ENCODE measurements at regions of chr2 and their contacts with region 1.

Region 1: DNA sequence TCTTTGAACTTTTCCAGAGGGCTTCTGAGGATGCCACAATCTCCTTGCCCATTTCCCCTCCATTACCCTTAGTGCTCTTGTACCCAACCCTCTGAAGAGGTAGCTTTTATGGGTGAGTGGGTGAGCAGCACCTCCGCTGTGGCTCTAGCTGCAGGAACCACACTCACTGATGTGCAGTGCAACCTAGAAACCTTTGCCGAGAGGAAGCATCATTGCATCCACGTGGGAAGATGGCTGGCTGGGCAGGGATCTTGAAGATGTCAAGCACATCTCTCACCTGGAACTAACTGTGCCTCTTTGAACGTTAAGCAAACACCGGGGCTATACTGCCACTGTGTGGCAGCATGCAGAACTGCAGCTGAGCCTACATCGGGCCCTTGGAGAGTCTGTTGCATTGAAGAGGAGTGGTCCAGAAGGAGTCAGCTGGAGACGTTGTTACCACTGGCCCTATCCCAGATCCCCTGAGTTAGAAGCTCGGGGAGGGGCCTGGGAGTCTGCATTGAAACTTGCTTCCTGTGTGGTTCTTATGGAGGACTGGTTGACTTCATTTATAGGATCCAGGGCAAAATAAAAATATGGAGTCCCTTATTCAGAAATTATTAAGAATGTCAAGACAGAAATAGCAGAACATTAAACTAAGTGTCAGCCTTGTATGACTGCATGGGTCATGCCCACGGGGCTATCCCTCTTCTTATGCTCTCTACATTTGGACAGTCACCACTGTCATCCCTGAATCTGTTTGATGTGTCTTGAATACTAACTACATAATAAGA is 28.7 kb downstream of the IGFBP5 start:
- DNase-seq: peak in 2 of 3 donors; percentile 57 to 64
- ATAC-seq: peak; percentile 76 to 84 (median 82)
- H3K4me3 ChIP-seq: no peak overlapping the region
- H3K27ac ChIP-seq: peak overlapping the region in 1 of 3 donors; percentile 71
- H3K4me1 ChIP-seq: peaks cover 0 to 17% (median 7%) of the 10 kb centered on the region in 4 donors
- H3K27me3 ChIP-seq: no peaks in the 10 kb centered on the region
- CTCF ChIP-seq: peak; percentile 95 to 99 (median 98)
- POLR2A ChIP-seq: no peak

Region 2: DNA sequence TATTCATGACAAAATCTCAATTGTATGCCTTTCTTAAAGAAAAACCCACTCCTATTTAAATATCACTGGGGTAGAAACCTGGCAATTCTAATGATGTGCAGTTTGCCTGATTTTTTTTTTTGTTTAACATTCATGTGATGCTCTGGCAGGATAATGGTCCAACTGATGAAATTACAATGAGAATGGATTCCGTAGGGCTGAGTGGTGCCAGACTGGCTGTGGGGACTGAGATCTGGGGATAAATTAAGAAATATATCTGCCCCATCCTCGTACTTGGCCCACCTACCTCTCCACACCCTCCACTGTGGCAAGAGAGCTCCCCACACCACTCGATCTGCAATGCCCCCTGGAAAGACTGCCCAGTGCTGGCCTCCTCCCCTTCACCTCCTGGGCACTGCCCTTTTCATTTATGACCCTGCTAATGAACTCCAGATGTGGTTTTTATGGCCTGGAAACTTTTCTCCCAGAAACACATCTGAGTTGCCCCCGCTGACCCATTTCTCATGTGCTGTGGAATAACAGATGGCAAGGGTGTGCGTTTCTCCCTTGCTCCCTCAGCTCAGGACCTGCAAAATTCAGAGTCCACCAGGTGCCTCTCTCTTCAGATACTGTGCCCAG is 201.0 kb before region 1 on chr2:
- intact Hi-C with region 1: no loop called
- DNase-seq: no peak
- ATAC-seq: no peak
- H3K4me3 ChIP-seq: no peak overlapping the region
- H3K27ac ChIP-seq: no peak overlapping the region
- H3K4me1 ChIP-seq: no peaks in the 10 kb centered on the region
- H3K27me3 ChIP-seq: no peaks in the 10 kb centered on the region
- CTCF ChIP-seq: no peak
- POLR2A ChIP-seq: no peak

Region 3: GRCh38 chr2:216519154-216519762 is 147.4 kb before region 1 on chr2:
- intact Hi-C with region 1: loop called (anchors 2 to 5 kb)
- DNase-seq: peak in 1 of 3 donors; percentile 74
- ATAC-seq: peak; percentile 83 to 89 (median 86)
- H3K4me3 ChIP-seq: no peak overlapping the region
- H3K27ac ChIP-seq: peak overlapping the region in 1 of 3 donors; percentile 14
- H3K4me1 ChIP-seq: peaks cover 0 to 30% (median 14%) of the 10 kb centered on the region in 4 donors
- H3K27me3 ChIP-seq: no peaks in the 10 kb centered on the region
- CTCF ChIP-seq: peak; percentile 78 to 86 (median 80)
- POLR2A ChIP-seq: no peak

Region 4: DNA sequence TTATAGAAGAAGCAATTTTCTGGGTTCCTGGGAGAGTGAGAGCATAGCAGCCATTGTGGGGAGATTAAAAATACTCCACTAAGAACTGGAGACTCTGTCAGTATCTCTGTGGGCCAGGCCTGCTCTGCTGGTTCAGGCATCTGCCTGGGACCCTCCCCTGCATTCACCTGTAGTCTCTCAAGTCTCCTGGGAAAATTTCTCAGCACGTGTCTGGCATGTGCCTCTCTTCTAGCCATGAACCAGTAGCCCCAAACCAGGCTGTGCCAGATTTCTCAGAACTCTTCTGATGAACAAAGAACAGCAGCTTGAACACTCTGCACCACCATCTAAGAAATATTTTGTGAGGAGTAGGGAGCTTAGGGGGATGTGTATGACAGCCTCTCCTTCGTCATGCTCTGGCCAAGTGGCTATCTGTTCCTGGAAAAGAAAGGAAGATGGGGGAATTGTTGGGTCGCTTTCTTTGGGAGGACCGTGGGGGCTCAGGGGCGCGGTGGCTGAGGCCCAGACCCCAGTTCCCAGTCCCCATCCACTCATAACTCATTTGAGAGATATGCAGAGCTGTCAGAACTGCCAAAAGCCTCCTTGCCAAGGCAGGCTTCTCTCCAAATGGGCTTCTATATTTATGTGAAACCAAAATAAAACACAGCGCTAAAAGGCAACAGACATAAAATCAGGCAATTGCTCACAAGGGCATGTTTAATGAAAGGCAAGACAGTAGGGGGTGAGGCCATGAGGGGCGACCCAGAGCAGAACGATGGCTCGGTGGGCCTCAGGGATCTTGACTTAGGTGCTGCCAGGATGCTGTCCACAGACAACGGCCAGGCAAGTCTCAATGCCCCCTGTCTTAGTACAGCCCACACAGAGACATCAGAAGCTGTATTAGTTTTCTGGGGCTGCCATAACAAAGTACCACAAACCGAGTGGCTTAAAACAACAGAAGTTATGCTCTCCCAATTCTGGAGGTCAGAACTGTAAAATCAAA is 308.0 kb after region 1 on chr2:
- intact Hi-C with region 1: no loop called
- DNase-seq: no peak
- ATAC-seq: no peak
- H3K4me3 ChIP-seq: no peak overlapping the region
- H3K27ac ChIP-seq: no peak overlapping the region
- H3K4me1 ChIP-seq: no peaks in the 10 kb centered on the region
- H3K27me3 ChIP-seq: no peaks in the 10 kb centered on the region
- CTCF ChIP-seq: no peak
- POLR2A ChIP-seq: no peak

Measured in right lobe of liver (tissue), 6 donors.